Body of pancreas (tissue), 4 donors: ENCODE measurements at regions of chr5 and their contacts with region 1.

Region 1: DNA sequence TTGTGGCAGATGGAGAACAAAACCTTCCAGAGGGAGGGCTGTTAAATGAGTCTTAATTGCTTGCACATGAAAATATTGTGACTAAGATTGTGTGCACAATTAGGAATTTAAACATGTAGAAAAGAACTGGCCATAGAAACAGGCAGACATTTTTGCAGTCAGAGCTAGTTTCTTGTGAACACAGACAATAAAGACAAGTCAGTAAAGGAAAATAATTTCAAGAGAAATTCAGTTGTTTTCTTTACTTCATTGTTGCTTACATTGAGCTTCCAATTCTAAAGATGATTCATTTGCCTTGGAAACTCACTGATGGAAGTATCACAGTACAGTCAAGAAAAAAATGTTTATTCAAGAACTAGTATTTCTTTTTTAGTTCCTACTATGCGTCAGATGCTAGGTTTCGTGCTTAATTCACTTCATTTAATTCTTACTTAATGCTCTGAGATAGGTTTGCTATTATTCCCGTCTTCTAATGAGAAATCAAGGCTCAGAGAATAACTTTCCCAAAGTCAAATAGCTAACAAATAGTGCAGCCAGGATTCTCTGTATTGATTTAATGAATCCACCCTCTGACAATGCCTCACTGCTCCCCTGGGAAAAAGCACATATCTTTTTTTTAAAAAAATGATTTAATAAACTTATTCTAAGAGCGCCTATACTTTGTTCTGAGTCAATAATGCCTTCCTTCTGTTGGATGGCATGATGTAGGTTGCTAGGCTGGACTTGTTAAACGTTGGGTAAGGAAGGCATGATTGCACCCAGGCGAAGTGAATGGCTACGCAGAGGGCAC is 581.4 kb downstream of the RAB3C start:
- DNase-seq: no peak
- ATAC-seq: no peak
- H3K4me3 ChIP-seq: no peak overlapping the region
- H3K27ac ChIP-seq: no peak overlapping the region
- H3K4me1 ChIP-seq: no peaks in the 10 kb centered on the region
- H3K27me3 ChIP-seq: no peaks in the 10 kb centered on the region
- CTCF ChIP-seq: no peak
- POLR2A ChIP-seq: no peak

Region 2: GRCh38 chr5:59039296-59040023 is 124.8 kb before region 1 on chr5:
- intact Hi-C with region 1: loop called (anchors 10 kb)
- DNase-seq: peak; percentile 53 to 75 (median 62)
- ATAC-seq: peak; percentile 60
- H3K4me3 ChIP-seq: peak overlapping the region; percentile 53 to 74
- H3K27ac ChIP-seq: peak overlapping the region in 3 of 4 donors; percentile 49 to 65 (median 58)
- H3K4me1 ChIP-seq: peaks cover 19% of the 10 kb centered on the region
- H3K27me3 ChIP-seq: no peaks in the 10 kb centered on the region
- CTCF ChIP-seq: no peak
- POLR2A ChIP-seq: peak in 2 of 3 donors; percentile 47 to 62

Region 3: GRCh38 chr5:59069438-59070079 is 94.7 kb before region 1 on chr5:
- intact Hi-C with region 1: no loop called
- DNase-seq: peak in 3 of 4 donors; percentile 12 to 65 (median 39)
- ATAC-seq: peak; percentile 94
- H3K4me3 ChIP-seq: no peak overlapping the region
- H3K27ac ChIP-seq: peak overlapping the region in 1 of 4 donors; percentile 42
- H3K4me1 ChIP-seq: no peaks in the 10 kb centered on the region
- H3K27me3 ChIP-seq: no peaks in the 10 kb centered on the region
- CTCF ChIP-seq: no peak
- POLR2A ChIP-seq: no peak